Heart right ventricle (tissue), 16 donors: ENCODE measurements at regions of chr3 and their contacts with region 1.

Region 1: DNA sequence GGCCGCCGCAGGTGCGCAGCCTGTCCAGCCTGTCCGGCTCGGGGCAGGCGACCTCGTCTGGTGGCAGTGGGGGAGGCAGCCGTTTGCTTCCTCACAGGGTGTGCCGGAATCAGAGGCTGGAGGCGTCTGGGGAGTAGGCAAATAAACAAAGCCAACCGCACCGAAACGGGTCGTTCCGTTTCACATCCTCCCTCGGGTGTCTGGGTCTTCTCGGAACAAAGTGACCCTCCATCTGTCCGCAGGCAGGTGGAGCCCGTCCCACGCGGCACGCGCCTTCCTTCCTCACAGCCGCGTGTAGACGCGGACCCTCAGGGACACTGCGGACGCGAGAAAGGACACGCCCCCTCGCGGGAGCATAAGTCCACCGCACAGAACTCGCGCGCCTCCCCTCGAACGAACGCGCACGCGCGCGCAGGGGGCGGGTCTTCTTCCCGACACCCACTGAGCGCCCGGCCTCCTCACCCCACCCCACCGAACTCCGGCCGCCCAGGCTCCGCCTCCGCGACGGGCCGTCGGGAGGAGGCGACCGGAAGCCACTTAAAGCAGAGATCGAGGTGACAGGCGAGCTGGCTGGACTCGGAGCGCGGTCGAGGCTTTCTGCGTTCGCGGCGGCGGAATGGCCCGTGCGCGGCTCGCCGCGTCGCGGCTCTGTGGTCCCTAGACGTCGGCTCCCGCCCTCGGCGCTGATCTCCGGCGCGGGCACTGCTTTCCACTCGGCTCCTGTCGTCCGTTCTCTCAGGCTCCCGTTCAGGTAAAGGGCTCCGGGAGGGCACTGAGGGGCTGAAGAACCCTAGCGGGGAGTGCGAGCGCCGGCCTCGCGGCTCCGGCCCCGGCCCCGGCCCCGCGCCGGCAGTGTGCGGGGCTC is at the start of gene TIPARP:
- DNase-seq: peak; percentile 99 to 100
- ATAC-seq: peak; percentile 96 to 99 (median 97)
- H3K4me3 ChIP-seq: peak within 1 kb of the TSS; percentile 72 to 98 (median 92)
- H3K27ac ChIP-seq: peak within 1 kb of the TSS; percentile 93 to 98 (median 97)
- H3K4me1 ChIP-seq: peaks cover 0 to 52% (median 35%) of the 10 kb centered on the region in 9 donors
- H3K27me3 ChIP-seq: no peaks in the 10 kb centered on the region
- CTCF ChIP-seq: peak; percentile 50 to 85 (median 72)
- total RNA-seq, gene TIPARP: 19.8 to 74.6 (median 23.9) TPM

Region 2: DNA sequence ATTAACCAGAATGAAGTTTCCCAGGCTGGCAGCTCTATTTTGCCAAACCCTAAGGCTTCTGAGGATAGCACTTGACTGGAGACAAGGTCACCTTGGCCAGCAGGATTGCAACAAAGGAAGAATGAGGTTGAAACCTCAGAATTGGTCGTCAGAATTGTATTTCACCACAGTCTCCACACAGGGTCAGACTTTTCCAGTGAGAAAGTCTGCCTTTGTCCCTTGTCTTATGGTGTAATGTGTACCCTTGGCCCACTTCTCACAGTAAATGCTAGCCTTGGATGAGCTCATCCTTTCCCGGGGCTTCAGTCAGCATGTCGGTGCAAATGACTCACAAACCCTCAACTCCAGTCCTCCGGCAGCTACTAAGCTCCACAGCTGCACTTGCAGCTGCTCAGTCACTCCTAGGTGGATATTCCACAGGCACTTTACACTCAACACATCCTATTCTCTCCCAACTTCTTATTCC is 139.1 kb before region 1 on chr3:
- intact Hi-C with region 1: loop called in 3 of 10 experiments (anchors 5 to 10 kb)
- DNase-seq: peak; percentile 25 to 73
- ATAC-seq: peak; percentile 85 to 98 (median 94)
- H3K4me3 ChIP-seq: no peak overlapping the region
- H3K27ac ChIP-seq: peak overlapping the region; percentile 19 to 73 (median 65)
- H3K4me1 ChIP-seq: peaks cover 2 to 32% (median 17%) of the 10 kb centered on the region in 9 donors
- H3K27me3 ChIP-seq: no peaks in the 10 kb centered on the region
- CTCF ChIP-seq: peak in 7 of 9 donors; percentile 12 to 56 (median 37)

Region 3: GRCh38 chr3:156547637-156548036 is 126.6 kb before region 1 on chr3:
- intact Hi-C with region 1: loop called in 5 of 10 experiments (anchors 1 to 10 kb)
- DNase-seq: no peak
- ATAC-seq: peak in 6 of 8 donors; percentile 57 to 78 (median 65)
- H3K4me3 ChIP-seq: no peak overlapping the region
- H3K27ac ChIP-seq: peak overlapping the region in 9 of 10 donors; percentile 38 to 91 (median 59)
- H3K4me1 ChIP-seq: peaks cover 5 to 99% (median 81%) of the 10 kb centered on the region in 9 donors
- H3K27me3 ChIP-seq: no peaks in the 10 kb centered on the region
- CTCF ChIP-seq: no peak

Region 4: DNA sequence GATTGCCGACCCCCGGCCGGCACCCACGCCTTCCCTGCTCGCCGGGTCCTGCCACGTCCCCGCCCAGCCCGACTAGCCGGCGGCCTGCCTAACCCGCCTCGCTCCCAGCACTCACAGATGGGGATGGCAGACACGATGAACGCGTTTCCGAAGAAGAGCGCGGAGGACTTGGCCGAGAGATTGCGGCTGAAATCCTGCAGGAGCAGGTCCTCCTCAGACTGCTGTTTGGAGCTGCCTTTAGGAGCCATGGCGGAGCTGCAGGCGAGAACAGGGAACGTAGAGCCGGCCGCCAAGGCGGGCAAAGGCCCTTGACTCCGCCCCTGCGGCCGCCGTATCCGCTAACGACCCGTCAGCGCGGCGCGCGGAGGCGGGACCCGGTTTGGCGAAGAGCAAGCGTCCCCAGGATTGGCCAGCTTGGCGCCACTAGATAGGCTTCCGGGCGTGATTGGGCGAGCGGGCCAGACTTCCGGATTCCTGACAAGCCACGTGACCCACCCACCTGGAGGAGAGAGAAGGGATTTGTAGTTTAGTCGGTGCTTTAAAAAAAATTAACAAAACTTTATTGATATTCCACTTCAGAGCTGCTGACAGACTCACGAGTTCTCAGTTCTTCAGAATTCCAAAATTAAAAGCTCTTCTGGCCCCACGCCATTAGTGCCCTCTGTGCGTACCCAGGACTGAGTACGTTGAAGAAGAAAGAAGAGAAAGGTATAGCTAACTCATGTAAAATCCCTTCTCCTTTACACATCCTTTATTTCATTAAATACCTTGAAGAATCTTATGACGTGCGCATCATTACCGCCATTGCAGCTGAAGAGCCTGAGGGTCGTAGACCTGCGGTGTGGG is 119.2 kb before region 1 on chr3 and contains the start of gene SSR3:
- intact Hi-C with region 1: loop called in 6 of 10 experiments (anchors 1 to 10 kb)
- DNase-seq: peak; percentile 99
- ATAC-seq: peak; percentile 99 to 100 (median 100)
- H3K4me3 ChIP-seq: peak within 1 kb of the TSS; percentile 63 to 96 (median 80)
- H3K27ac ChIP-seq: peak within 1 kb of the TSS; percentile 76 to 97 (median 92)
- H3K4me1 ChIP-seq: peaks cover 0 to 64% (median 45%) of the 10 kb centered on the region in 9 donors
- H3K27me3 ChIP-seq: no peaks in the 10 kb centered on the region
- CTCF ChIP-seq: peak in 5 of 9 donors; percentile 11 to 41 (median 25)
- total RNA-seq, gene SSR3: 172 to 256 (median 216) TPM

Region 5: DNA sequence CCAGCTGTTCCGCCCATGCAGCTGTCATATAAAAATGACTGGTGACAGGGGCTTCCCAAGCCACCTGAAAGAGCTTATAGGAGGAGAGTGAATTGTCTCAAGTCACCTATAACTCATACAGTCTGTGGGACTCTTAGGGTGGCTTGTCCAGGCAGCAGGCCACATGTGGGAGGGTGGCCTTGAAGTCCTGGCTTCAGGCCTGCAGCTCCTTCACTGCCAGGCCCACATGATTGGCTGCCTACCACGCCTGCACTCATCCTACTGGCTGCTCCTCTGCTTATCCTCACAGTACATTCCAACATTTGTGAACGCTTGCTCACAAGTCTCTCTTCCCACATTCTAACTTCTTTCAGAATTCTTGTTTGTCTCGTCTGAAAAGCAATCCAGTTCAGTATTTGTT is 40.9 kb before region 1 on chr3:
- intact Hi-C with region 1: no loop called
- DNase-seq: peak; percentile 16 to 50
- ATAC-seq: peak; percentile 83 to 94 (median 88)
- H3K4me3 ChIP-seq: no peak overlapping the region
- H3K27ac ChIP-seq: peak overlapping the region in 2 of 10 donors; percentile 15 to 22
- H3K4me1 ChIP-seq: peaks cover 0 to 12% (median 0%) of the 10 kb centered on the region in 9 donors
- H3K27me3 ChIP-seq: no peaks in the 10 kb centered on the region
- CTCF ChIP-seq: no peak

Region 6: DNA sequence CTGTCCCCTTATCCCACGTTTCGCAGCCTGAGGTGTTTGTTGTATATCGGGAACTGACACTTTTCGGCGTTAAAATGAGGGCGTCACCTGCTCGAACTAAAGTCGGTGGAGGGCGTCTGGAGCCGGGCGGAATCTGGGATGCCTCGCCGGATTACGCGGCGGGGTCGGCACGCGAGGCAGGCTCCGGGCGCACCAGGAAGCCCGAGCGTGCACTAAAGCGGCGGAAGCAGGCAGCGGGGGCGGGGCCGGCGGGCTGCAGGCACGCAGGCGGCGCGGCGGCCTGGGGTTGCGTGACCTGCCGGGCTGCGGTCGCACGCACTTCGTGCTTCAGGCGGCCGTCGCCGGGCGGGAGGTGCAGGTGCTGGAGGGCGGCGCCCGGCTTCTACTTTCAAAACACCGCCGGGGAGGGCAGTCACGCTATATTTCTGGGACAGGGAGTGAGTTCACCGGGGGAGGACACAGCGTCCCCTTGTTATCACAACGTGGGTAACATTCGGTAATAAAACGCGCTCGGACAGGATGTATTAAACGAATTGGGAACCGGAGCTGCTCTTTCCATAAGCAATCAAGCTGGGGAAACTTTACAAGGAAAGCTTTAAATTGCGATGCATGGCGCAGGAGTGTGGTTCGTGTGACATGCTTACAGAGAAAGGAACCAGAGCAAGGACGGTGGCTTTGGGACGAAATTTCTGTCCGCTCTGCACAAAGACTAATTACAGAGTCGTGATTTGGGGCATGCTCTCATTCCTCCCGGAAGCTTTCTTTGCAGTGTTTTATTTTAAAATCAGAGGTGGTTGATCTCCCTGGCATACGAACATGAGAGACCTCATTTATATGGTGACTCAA is 142.7 kb after region 1 on chr3:
- intact Hi-C with region 1: loop called in 7 of 10 experiments (anchors 2 to 10 kb)
- DNase-seq: peak; percentile 74 to 88
- ATAC-seq: peak; percentile 90 to 96 (median 93)
- H3K4me3 ChIP-seq: peak overlapping the region; percentile 54 to 73 (median 64)
- H3K27ac ChIP-seq: peak overlapping the region; percentile 79 to 94 (median 82)
- H3K4me1 ChIP-seq: peaks cover 0 to 28% (median 17%) of the 10 kb centered on the region in 9 donors
- H3K27me3 ChIP-seq: no peaks in the 10 kb centered on the region
- CTCF ChIP-seq: peak in 3 of 9 donors; percentile 12 to 41 (median 26)

Region 7: GRCh38 chr3:156826144-156826895 is 152.0 kb after region 1 on chr3 and contains the start of gene LEKR1:
- intact Hi-C with region 1: loop called in 7 of 10 experiments (anchors 2 to 10 kb)
- DNase-seq: peak; percentile 89 to 90
- ATAC-seq: peak; percentile 95 to 98 (median 97)
- H3K4me3 ChIP-seq: peak within 1 kb of the TSS; percentile 50 to 80 (median 71)
- H3K27ac ChIP-seq: peak within 1 kb of the TSS; percentile 85 to 95 (median 92)
- H3K4me1 ChIP-seq: peaks cover 0 to 13% (median 8%) of the 10 kb centered on the region in 9 donors
- H3K27me3 ChIP-seq: no peaks in the 10 kb centered on the region
- CTCF ChIP-seq: no peak
- total RNA-seq, gene LEKR1: 0.17 to 3.0 (median 0.92) TPM

Region 8: GRCh38 chr3:157136647-157137387 is 462.5 kb after region 1 on chr3:
- intact Hi-C with region 1: loop called in 8 of 10 experiments (anchors 1 to 5 kb)
- DNase-seq: peak in 1 of 2 donors; percentile 20
- ATAC-seq: peak; percentile 18 to 49 (median 32)
- H3K4me3 ChIP-seq: peak overlapping the region in 1 of 10 donors; percentile 41
- H3K27ac ChIP-seq: peak overlapping the region; percentile 15 to 77 (median 58)
- H3K4me1 ChIP-seq: peaks cover 0 to 60% (median 39%) of the 10 kb centered on the region in 9 donors
- H3K27me3 ChIP-seq: no peaks in the 10 kb centered on the region
- CTCF ChIP-seq: no peak

Region 9: DNA sequence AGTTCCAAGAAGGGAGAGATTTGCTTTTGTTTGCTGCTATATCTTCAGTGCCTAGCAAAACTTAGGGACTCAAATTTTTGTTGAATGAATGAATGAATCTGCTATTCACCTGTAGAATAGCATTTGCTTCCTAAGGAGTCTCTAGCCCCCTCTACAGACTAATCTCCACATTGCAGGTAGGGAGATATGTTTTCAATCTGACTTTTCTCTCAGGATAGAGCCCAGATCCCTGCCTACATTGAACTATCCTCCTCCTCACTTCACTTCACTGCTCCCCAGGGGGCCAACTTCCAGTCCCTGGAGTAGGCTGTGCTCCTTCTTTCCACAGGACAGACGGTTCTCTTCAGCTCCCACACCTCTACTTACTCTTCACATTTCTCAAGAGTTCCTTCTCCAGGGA is 680.4 kb after region 1 on chr3:
- intact Hi-C with region 1: no loop called
- DNase-seq: no peak
- ATAC-seq: no peak
- H3K4me3 ChIP-seq: no peak overlapping the region
- H3K27ac ChIP-seq: no peak overlapping the region
- H3K4me1 ChIP-seq: peaks cover 0 to 1% (median 0%) of the 10 kb centered on the region in 9 donors
- H3K27me3 ChIP-seq: peaks cover 0 to 3% (median 0%) of the 10 kb centered on the region in 7 donors
- CTCF ChIP-seq: peak in 7 of 9 donors; percentile 15 to 47 (median 32)